ENCODE measurements at regions of chr11 and their contacts with region 1.

Region 1: GRCh38 chr11:250740-251299 is 14.0 kb downstream of the PSMD13 start:
- DNase-seq: peak; percentile 89
- H3K4me3 Mint-ChIP-seq: no peak overlapping the region
- H3K27ac Mint-ChIP-seq: peak overlapping the region; percentile 64
- H3K4me1 Mint-ChIP-seq: peaks cover 21% of the 10 kb centered on the region
- H3K27me3 Mint-ChIP-seq: no peaks in the 10 kb centered on the region

Region 2: GRCh38 chr11:196786-197719 is 53.8 kb before region 1 on chr11:
- CTCF ChIA-PET with region 1: no interaction called
- POLR2A ChIA-PET with region 1: no interaction called
- intact Hi-C with region 1: no loop called
- DNase-seq: no peak
- H3K4me3 Mint-ChIP-seq: no peak overlapping the region
- H3K27ac Mint-ChIP-seq: no peak overlapping the region
- H3K4me1 Mint-ChIP-seq: peaks cover 16% of the 10 kb centered on the region
- H3K27me3 Mint-ChIP-seq: no peaks in the 10 kb centered on the region

Region 3: GRCh38 chr11:236774-237767 is 13.7 kb before region 1 on chr11 and contains the start of gene PSMD13:
- CTCF ChIA-PET with region 1: interaction called, 30 read pairs
- POLR2A ChIA-PET with region 1: no interaction called
- intact Hi-C with region 1: no loop called
- DNase-seq: peak; percentile 93
- H3K4me3 Mint-ChIP-seq: peak within 1 kb of the TSS; percentile 97
- H3K27ac Mint-ChIP-seq: peak within 1 kb of the TSS; percentile 94
- H3K4me1 Mint-ChIP-seq: peaks cover 49% of the 10 kb centered on the region
- H3K27me3 Mint-ChIP-seq: no peaks in the 10 kb centered on the region
- total RNA-seq, gene PSMD13: 210 to 214 TPM

Region 4: GRCh38 chr11:279966-280582 is 29.3 kb after region 1 on chr11:
- CTCF ChIA-PET with region 1: interaction called, 57 read pairs
- POLR2A ChIA-PET with region 1: no interaction called
- intact Hi-C with region 1: no loop called
- DNase-seq: peak; percentile 62
- H3K4me3 Mint-ChIP-seq: peak overlapping the region; percentile 68
- H3K27ac Mint-ChIP-seq: peak overlapping the region; percentile 54
- H3K4me1 Mint-ChIP-seq: peaks cover 50% of the 10 kb centered on the region
- H3K27me3 Mint-ChIP-seq: peaks cover 18% of the 10 kb centered on the region

Region 5: GRCh38 chr11:288328-289144 is 37.7 kb after region 1 on chr11 and contains the start of gene PGGHG:
- CTCF ChIA-PET with region 1: interaction called, 57 read pairs
- POLR2A ChIA-PET with region 1: no interaction called
- intact Hi-C with region 1: no loop called
- DNase-seq: peak; percentile 61
- H3K4me3 Mint-ChIP-seq: peak within 1 kb of the TSS; percentile 96
- H3K27ac Mint-ChIP-seq: peak within 1 kb of the TSS; percentile 95
- H3K4me1 Mint-ChIP-seq: peaks cover 27% of the 10 kb centered on the region
- H3K27me3 Mint-ChIP-seq: no peaks in the 10 kb centered on the region
- total RNA-seq, gene PGGHG: 74.3 to 75.0 TPM

Region 6: DNA sequence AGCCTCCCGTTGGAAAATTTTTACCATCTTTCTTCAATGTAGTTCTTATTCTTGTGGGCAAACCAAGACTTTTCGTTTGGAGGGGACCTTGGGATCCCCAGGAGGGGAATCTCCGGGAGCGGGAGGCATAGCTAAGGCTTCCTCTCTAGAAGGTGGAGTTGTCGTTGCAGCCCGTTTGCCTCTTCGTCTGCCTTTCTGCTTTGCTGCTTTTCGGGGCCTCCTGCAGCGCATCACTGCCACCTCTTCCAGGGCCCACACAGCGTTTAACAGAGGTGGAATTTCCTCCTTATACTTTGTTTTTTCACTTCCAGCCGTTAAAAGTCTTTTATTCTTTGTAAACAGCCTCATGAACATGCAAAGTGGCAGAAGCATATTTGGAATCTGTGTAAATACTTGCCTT is 73.3 kb after region 1 on chr11:
- CTCF ChIA-PET with region 1: no interaction called
- POLR2A ChIA-PET with region 1: no interaction called
- intact Hi-C with region 1: no loop called
- DNase-seq: no peak
- H3K4me3 Mint-ChIP-seq: no peak overlapping the region
- H3K27ac Mint-ChIP-seq: no peak overlapping the region
- H3K4me1 Mint-ChIP-seq: peaks cover 48% of the 10 kb centered on the region
- H3K27me3 Mint-ChIP-seq: no peaks in the 10 kb centered on the region

Region 7: GRCh38 chr11:355581-356458 is 105.0 kb after region 1 on chr11:
- CTCF ChIA-PET with region 1: interaction called, 18 read pairs
- POLR2A ChIA-PET with region 1: interaction called, 3 read pairs
- intact Hi-C with region 1: loop called (anchors 5 kb)
- DNase-seq: peak; percentile 92
- H3K4me3 Mint-ChIP-seq: no peak overlapping the region
- H3K27ac Mint-ChIP-seq: no peak overlapping the region
- H3K4me1 Mint-ChIP-seq: peaks cover 32% of the 10 kb centered on the region
- H3K27me3 Mint-ChIP-seq: no peaks in the 10 kb centered on the region

Region 8: GRCh38 chr11:363948-364761 is 113.3 kb after region 1 on chr11:
- CTCF ChIA-PET with region 1: interaction called, 34 read pairs
- POLR2A ChIA-PET with region 1: no interaction called
- intact Hi-C with region 1: loop called (anchors 5 kb)
- DNase-seq: peak; percentile 69
- H3K4me3 Mint-ChIP-seq: no peak overlapping the region
- H3K27ac Mint-ChIP-seq: no peak overlapping the region
- H3K4me1 Mint-ChIP-seq: peaks cover 8% of the 10 kb centered on the region
- H3K27me3 Mint-ChIP-seq: peaks cover 24% of the 10 kb centered on the region

Region 9: DNA sequence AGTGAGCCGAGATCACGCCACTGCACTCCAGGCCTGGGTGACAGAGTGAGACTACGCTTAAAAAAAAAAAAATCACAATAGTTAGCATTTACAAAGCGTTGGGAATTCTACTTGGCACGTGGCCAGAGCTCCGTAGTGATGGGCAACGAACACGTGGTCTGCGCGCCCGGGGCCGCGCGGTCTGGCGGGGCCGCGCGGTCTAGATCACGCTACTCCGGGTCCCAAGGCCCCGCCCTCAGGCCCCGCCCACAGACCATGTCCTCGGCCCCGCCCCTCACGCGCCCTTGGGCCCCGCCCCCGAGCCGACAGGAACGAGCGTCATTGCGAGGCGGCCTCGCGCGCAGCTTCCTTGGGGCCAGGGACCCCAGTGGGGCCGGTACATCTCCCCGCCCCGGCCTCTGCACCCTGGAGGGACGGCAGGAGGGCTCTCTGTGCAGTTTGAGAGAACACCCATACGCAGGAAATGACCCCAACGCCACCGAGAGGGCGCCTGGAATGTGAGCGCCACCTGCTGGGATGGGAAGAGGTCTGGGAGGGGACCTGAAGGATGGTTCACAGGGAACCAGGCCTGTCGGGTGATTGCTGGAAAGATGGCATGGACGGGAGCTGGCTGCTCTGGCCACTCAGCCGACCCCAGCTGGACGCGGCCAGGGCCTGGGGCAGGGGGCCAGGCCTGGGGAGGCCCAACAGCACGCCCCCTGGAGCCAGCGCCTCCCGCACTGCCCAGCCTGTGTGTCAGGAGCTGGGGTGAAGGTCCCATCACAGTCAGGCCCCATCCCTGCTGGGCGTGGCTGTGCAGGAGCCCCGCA is 197.3 kb after region 1 on chr11:
- CTCF ChIA-PET with region 1: interaction called, 18 read pairs
- POLR2A ChIA-PET with region 1: no interaction called
- intact Hi-C with region 1: no loop called
- DNase-seq: peak; percentile 97
- H3K4me3 Mint-ChIP-seq: peak overlapping the region; percentile 90
- H3K27ac Mint-ChIP-seq: peak overlapping the region; percentile 95
- H3K4me1 Mint-ChIP-seq: peaks cover 21% of the 10 kb centered on the region
- H3K27me3 Mint-ChIP-seq: peaks cover 2% of the 10 kb centered on the region

Measured in activated CD4-positive, alpha-beta memory T cell treated with anti-CD3 and anti-CD28 coated beads for 36 hours (primary cell).